GM12878 (cell line): ENCODE measurements at regions of chr12 and their contacts with region 1.

Region 1: DNA sequence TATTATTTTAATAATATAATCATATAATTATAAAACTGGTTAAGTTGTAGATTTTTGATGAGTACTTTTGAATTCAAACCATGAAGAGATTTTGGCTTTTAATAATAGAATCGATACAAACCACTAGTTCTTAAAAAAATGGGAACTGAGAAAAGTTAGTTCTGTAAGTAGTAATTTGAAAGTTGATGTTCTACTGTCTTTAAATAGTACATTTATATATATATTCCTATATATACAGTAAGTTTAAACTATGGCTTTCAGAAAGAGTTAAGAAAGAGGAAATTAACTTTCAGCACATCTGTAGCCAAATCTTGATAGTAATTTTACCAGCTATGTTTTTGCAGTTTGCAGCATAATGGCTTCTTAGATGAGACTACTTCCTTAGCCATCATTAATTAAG is 7.8 kb downstream of the LRRK2 start:
- DNase-seq: no peak
- ATAC-seq: peak; percentile 45
- H3K4me3 ChIP-seq: no peak overlapping the region
- H3K27ac ChIP-seq: no peak overlapping the region
- H3K4me1 ChIP-seq: peaks cover 13% of the 10 kb centered on the region; the same call in 1 of the 2 replicates
- H3K27me3 ChIP-seq: no peaks in the 10 kb centered on the region
- CTCF ChIP-seq: no peak
- EP300 ChIP-seq: no peak
- POLR2A ChIP-seq: no peak
- RAD21 ChIP-seq: no peak

Region 2: DNA sequence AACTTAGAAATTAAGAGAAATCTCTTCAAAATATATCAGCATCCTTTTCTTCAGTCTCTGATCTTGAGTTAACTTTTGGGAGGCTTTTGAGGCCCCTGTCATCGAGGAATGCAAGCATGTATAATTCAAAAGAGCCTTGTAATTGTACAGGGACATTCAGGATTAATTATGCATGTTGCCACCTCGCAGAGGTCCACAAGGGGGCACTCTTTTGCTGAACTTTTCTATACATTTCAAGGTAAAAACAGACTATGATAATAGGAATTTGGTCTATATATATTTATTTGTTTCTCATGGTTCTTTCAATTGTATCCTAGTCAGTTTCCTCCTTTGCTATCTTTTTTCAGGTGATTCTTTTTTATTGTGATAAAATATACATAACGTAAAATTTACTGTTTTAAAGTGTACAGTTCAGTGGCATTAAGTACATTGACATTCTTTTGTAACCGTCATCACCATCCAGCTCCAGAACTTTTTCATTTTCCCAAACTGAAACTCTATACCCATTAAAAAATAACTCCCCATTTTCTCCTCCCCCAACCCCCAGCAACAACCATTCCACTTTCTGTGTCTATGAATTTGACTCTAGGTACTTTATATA is 79.7 kb before region 1 on chr12:
- CTCF ChIA-PET with region 1: interaction called, 12 read pairs
- POLR2A ChIA-PET with region 1: interaction called, 4 read pairs
- RAD21 ChIA-PET with region 1: interaction called, 15 read pairs
- SMC1A ChIA-PET with region 1: interaction called, 65 read pairs
- in situ Hi-C with region 1: no loop called
- intact Hi-C with region 1: no loop called
- DNase-seq: no peak
- ATAC-seq: peak; percentile 78
- H3K4me3 ChIP-seq: no peak overlapping the region
- H3K27ac ChIP-seq: no peak overlapping the region
- H3K4me1 ChIP-seq: no peaks in the 10 kb centered on the region
- H3K27me3 ChIP-seq: no peaks in the 10 kb centered on the region
- CTCF ChIP-seq: peak; percentile 50 to 69 (median 66); a peak in 5 of 6 replicates
- EP300 ChIP-seq: no peak
- POLR2A ChIP-seq: no peak
- RAD21 ChIP-seq: peak; percentile 84

Region 3: DNA sequence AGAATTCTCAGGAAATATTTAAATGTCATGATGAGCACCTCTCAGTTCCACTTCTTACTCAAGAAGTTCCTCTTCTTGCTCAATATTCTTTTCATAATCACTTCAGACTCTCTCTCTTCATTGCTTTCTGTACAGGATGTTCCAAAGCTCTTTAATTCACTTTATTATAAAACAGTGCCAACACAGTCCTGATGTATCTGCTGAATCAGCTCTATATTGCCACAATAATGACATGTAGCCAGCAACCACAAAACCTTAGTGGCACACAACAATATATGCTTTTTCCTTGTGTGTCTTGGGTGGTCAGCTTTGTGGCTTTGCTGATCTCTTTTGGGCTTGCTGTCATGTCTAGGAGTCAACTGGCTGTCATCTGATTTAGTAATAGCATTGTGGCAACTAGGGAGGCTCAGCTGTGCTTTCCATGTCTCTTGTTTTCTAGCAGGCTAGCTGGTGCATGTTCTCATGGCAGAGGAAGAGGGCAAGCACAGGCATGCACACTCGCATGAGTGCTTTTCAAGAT is 74.0 kb before region 1 on chr12:
- CTCF ChIA-PET with region 1: interaction called, 12 read pairs
- POLR2A ChIA-PET with region 1: interaction called, 7 read pairs
- RAD21 ChIA-PET with region 1: interaction called, 15 read pairs
- SMC1A ChIA-PET with region 1: interaction called, 65 read pairs
- in situ Hi-C with region 1: no loop called
- intact Hi-C with region 1: no loop called
- DNase-seq: no peak
- ATAC-seq: peak; percentile 84
- H3K4me3 ChIP-seq: no peak overlapping the region
- H3K27ac ChIP-seq: peak overlapping the region; percentile 53; the same call in 1 of the 2 replicates
- H3K4me1 ChIP-seq: peaks cover 10% of the 10 kb centered on the region
- H3K27me3 ChIP-seq: no peaks in the 10 kb centered on the region
- CTCF ChIP-seq: no peak
- EP300 ChIP-seq: no peak
- POLR2A ChIP-seq: no peak
- RAD21 ChIP-seq: no peak

Region 4: GRCh38 chr12:40202095-40203059 is 30.2 kb before region 1 on chr12:
- CTCF ChIA-PET with region 1: interaction called, 6 read pairs
- POLR2A ChIA-PET with region 1: interaction called, 4 read pairs
- RAD21 ChIA-PET with region 1: interaction called, 40 read pairs
- SMC1A ChIA-PET with region 1: interaction called, 60 read pairs
- in situ Hi-C with region 1: no loop called
- intact Hi-C with region 1: no loop called
- DNase-seq: no peak
- ATAC-seq: peak; percentile 79
- H3K4me3 ChIP-seq: no peak overlapping the region
- H3K27ac ChIP-seq: no peak overlapping the region
- H3K4me1 ChIP-seq: no peaks in the 10 kb centered on the region
- H3K27me3 ChIP-seq: no peaks in the 10 kb centered on the region
- CTCF ChIP-seq: no peak
- EP300 ChIP-seq: peak in 1 of 2 experiments; percentile 44; a peak in 1 of 4 replicates
- POLR2A ChIP-seq: no peak
- RAD21 ChIP-seq: no peak

Region 5: DNA sequence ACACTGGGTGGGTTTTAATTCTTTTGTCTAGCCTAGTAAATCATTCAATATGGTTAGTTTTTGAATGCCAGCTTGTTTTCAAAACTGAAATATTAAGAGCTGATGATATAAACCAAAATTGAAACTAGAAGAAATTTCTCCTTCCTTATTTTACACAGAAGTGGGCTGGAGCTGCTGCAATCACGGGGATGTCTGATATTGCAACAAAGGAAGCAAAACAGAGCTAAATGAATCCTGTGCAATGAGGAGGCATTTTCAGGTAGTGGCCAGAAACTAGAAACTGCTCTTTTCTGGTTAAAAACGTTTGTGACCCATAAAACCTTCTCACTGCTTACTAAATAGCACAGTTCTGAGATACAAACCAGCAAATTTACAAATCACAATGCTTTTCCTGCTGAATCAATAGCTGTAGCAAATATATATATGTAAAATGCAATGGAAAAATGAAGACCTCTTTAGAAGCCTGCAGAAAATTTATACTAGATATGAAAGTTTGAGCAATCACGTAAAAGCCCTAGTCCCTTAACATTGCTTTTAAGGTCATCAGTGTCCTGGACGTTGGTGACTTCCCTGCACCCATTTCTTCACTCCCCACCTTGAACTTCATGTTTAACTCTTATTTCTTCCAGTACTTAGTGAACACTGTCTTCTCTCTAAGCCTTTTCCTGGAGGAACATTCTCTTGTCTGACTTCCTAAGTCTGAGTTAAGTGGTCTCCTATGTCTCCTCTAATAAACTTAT is 23.7 kb before region 1 on chr12:
- CTCF ChIA-PET with region 1: interaction called, 6 read pairs
- POLR2A ChIA-PET with region 1: interaction called, 15 read pairs
- RAD21 ChIA-PET with region 1: interaction called, 40 read pairs
- SMC1A ChIA-PET with region 1: interaction called, 60 read pairs
- in situ Hi-C with region 1: no loop called
- intact Hi-C with region 1: no loop called
- DNase-seq: no peak
- ATAC-seq: peak; percentile 94
- H3K4me3 ChIP-seq: no peak overlapping the region
- H3K27ac ChIP-seq: no peak overlapping the region
- H3K4me1 ChIP-seq: peaks cover 8% of the 10 kb centered on the region
- H3K27me3 ChIP-seq: no peaks in the 10 kb centered on the region
- CTCF ChIP-seq: no peak
- EP300 ChIP-seq: no peak
- POLR2A ChIP-seq: no peak
- RAD21 ChIP-seq: no peak

Region 6: GRCh38 chr12:40248585-40249297 is 16.1 kb after region 1 on chr12:
- CTCF ChIA-PET with region 1: interaction called, 16 read pairs
- POLR2A ChIA-PET with region 1: no interaction called
- RAD21 ChIA-PET with region 1: interaction called, 17 read pairs
- SMC1A ChIA-PET with region 1: interaction called, 28 read pairs
- in situ Hi-C with region 1: no loop called
- intact Hi-C with region 1: no loop called
- DNase-seq: no peak
- ATAC-seq: peak; percentile 87
- H3K4me3 ChIP-seq: no peak overlapping the region
- H3K27ac ChIP-seq: no peak overlapping the region
- H3K4me1 ChIP-seq: peaks cover 6% of the 10 kb centered on the region; the same call in 1 of the 2 replicates
- H3K27me3 ChIP-seq: no peaks in the 10 kb centered on the region
- CTCF ChIP-seq: no peak
- EP300 ChIP-seq: no peak
- POLR2A ChIP-seq: no peak
- RAD21 ChIP-seq: no peak

Region 7: DNA sequence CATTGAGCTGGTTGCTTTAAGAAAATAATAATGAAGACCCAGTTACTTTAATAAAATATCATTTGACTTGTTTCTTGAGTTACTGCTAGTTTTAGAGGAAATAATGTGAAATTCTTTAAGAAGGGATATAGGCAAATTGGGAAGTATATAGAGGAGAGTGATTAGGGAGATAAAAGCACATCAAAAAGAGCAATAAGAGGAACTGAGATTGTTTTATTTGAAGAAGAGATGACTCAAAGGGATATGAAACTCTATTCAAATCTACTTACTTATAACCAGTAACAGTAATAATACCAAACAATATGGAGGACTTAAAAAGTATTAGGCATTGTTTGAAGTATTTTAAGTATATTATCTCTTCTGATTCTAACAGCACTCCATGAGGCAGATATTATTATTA is 29.3 kb after region 1 on chr12:
- CTCF ChIA-PET with region 1: interaction called, 5 read pairs
- POLR2A ChIA-PET with region 1: no interaction called
- RAD21 ChIA-PET with region 1: interaction called, 8 read pairs
- SMC1A ChIA-PET with region 1: interaction called, 15 read pairs
- in situ Hi-C with region 1: no loop called
- intact Hi-C with region 1: loop called (anchors 2 kb)
- DNase-seq: no peak
- ATAC-seq: peak; percentile 84
- H3K4me3 ChIP-seq: no peak overlapping the region
- H3K27ac ChIP-seq: no peak overlapping the region
- H3K4me1 ChIP-seq: peaks cover 13% of the 10 kb centered on the region
- H3K27me3 ChIP-seq: no peaks in the 10 kb centered on the region
- CTCF ChIP-seq: no peak
- EP300 ChIP-seq: peak; percentile 50 to 72
- POLR2A ChIP-seq: no peak
- RAD21 ChIP-seq: no peak

Region 8: DNA sequence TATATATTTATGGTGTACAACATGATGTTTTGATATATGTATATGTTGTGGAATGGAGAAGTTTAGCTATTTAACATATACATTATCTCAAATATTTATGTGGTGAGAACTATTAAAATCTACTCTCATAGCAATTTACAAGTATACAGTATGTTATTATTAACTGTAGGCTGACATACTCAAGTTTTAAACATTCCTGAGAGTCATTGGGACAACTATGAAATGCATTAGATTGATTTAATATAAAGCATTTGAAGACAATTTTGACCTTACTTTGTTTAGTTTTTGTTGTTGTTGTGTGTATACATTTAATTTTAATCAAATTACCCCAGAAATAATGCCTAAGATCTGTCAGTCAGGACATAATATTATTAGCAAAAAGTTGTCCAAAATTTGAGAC is 91.7 kb after region 1 on chr12:
- CTCF ChIA-PET with region 1: no interaction called
- POLR2A ChIA-PET with region 1: no interaction called
- RAD21 ChIA-PET with region 1: no interaction called
- SMC1A ChIA-PET with region 1: no interaction called
- in situ Hi-C with region 1: no loop called
- intact Hi-C with region 1: no loop called
- DNase-seq: no peak
- ATAC-seq: no peak
- H3K4me3 ChIP-seq: no peak overlapping the region
- H3K27ac ChIP-seq: no peak overlapping the region
- H3K4me1 ChIP-seq: no peaks in the 10 kb centered on the region
- H3K27me3 ChIP-seq: no peaks in the 10 kb centered on the region
- CTCF ChIP-seq: no peak
- EP300 ChIP-seq: no peak
- POLR2A ChIP-seq: no peak
- RAD21 ChIP-seq: no peak